Gastrocnemius medialis (tissue), 4 donors: ENCODE measurements at regions of chr9 and their contacts with region 1.

Region 1: GRCh38 chr9:1400983-1401382 is 350.8 kb downstream of the DMRT2 start:
- DNase-seq: no peak
- ATAC-seq: no peak
- H3K4me3 ChIP-seq: no peak overlapping the region
- H3K27ac ChIP-seq: no peak overlapping the region
- H3K4me1 ChIP-seq: no peaks in the 10 kb centered on the region
- H3K27me3 ChIP-seq: no peaks in the 10 kb centered on the region
- CTCF ChIP-seq: no peak
- POLR2A ChIP-seq: no peak

Region 2: GRCh38 chr9:706606-707459 is 694.1 kb before region 1 on chr9:
- in situ Hi-C with region 1: no loop called
- intact Hi-C with region 1: no loop called
- DNase-seq: peak; percentile 68 to 81
- ATAC-seq: peak; percentile 89 to 92
- H3K4me3 ChIP-seq: peak overlapping the region; percentile 49 to 65 (median 60)
- H3K27ac ChIP-seq: peak overlapping the region; percentile 68 to 89 (median 80)
- H3K4me1 ChIP-seq: peaks cover 25 to 39% of the 10 kb centered on the region in 2 donors
- H3K27me3 ChIP-seq: no peaks in the 10 kb centered on the region
- CTCF ChIP-seq: no peak
- POLR2A ChIP-seq: peak in 1 of 2 donors; percentile 67

Region 3: GRCh38 chr9:1303932-1304331 is 97.1 kb before region 1 on chr9:
- in situ Hi-C with region 1: no loop called
- intact Hi-C with region 1: no loop called
- DNase-seq: no peak
- ATAC-seq: no peak
- H3K4me3 ChIP-seq: no peak overlapping the region
- H3K27ac ChIP-seq: no peak overlapping the region
- H3K4me1 ChIP-seq: no peaks in the 10 kb centered on the region
- H3K27me3 ChIP-seq: no peaks in the 10 kb centered on the region
- CTCF ChIP-seq: no peak
- POLR2A ChIP-seq: no peak

Region 4: GRCh38 chr9:1458476-1458875 is 57.5 kb after region 1 on chr9:
- in situ Hi-C with region 1: loop called in 1 of 4 experiments (anchors 10 kb)
- intact Hi-C with region 1: no loop called
- DNase-seq: no peak
- ATAC-seq: peak; percentile 44 to 46
- H3K4me3 ChIP-seq: no peak overlapping the region
- H3K27ac ChIP-seq: no peak overlapping the region
- H3K4me1 ChIP-seq: no peaks in the 10 kb centered on the region
- H3K27me3 ChIP-seq: no peaks in the 10 kb centered on the region
- CTCF ChIP-seq: no peak
- POLR2A ChIP-seq: no peak

Region 5: GRCh38 chr9:1580215-1580614 is 179.2 kb after region 1 on chr9:
- in situ Hi-C with region 1: no loop called
- intact Hi-C with region 1: no loop called
- DNase-seq: no peak
- ATAC-seq: no peak
- H3K4me3 ChIP-seq: no peak overlapping the region
- H3K27ac ChIP-seq: no peak overlapping the region
- H3K4me1 ChIP-seq: no peaks in the 10 kb centered on the region
- H3K27me3 ChIP-seq: no peaks in the 10 kb centered on the region
- CTCF ChIP-seq: no peak
- POLR2A ChIP-seq: no peak

Region 6: DNA sequence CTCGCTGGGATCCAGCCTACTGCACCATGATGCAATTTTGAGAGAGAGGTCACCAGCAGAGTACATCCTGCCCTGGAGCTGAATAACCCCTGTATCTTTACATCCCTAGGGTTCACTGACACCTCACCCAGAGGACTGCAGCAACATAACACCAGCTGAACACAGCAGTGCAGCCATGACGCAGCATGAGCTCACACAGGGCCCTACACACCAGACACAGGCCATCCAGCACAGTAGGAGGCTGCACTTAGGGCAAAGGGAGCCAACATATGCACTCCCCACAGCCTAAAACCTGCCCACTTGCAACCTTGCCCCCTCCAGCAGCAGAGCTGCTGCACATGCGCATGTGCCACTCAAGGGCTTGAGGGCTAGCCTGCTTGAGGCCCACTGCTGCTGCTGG is 456.8 kb after region 1 on chr9:
- in situ Hi-C with region 1: no loop called
- intact Hi-C with region 1: no loop called
- DNase-seq: no peak
- ATAC-seq: no peak
- H3K4me3 ChIP-seq: no peak overlapping the region
- H3K27ac ChIP-seq: no peak overlapping the region
- H3K4me1 ChIP-seq: no peaks in the 10 kb centered on the region
- H3K27me3 ChIP-seq: no peaks in the 10 kb centered on the region
- CTCF ChIP-seq: no peak
- POLR2A ChIP-seq: no peak